ENCODE measurements at regions of chr19 and their contacts with region 1.

Region 1: DNA sequence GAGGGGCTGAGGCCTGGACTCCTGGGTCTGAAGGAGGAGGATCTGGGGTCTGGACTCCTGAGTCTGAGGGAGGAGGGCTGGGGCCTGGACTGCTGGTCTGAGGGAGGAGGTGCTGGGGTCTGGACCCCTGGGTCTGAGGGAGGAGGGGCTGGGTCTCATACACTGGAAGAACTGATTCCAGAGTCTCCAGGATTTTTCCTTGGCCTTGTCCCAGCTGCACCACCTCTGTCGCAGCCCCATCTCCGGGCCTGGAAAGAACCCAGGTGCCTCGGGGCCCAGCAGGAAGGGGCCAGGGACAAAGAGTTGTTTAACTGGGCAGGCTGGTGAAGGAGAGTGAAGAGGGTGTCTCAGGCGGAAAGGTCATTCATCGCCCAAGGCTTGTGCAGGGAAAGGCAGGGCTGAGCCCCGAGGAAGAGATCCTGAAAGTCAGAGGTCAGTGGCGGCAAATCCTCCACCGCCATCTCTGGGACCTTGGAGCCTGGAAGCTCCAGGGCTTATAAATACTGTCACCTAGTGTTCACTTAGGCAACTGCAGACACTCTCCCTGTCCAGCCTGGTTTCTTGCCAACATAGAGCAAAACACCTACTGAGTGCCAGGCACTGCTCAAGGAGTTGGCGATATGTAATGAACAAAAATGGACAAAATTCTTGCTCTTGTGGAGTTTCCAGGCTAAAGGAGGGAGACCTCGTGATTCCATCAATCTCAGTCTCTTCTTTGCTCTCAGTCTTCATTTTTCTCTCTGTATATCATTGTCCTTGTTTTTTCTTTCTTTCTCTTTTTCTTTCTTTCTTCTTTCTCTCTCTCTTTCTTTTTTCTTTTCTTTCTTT is 4.4 kb upstream of the KCNN4 start:
- H3K4me3 Mint-ChIP-seq: no peak overlapping the region
- H3K27ac Mint-ChIP-seq: peak overlapping the region; percentile 0
- H3K4me1 Mint-ChIP-seq: peaks cover 47% of the 10 kb centered on the region
- H3K27me3 Mint-ChIP-seq: no peaks in the 10 kb centered on the region

Region 2: DNA sequence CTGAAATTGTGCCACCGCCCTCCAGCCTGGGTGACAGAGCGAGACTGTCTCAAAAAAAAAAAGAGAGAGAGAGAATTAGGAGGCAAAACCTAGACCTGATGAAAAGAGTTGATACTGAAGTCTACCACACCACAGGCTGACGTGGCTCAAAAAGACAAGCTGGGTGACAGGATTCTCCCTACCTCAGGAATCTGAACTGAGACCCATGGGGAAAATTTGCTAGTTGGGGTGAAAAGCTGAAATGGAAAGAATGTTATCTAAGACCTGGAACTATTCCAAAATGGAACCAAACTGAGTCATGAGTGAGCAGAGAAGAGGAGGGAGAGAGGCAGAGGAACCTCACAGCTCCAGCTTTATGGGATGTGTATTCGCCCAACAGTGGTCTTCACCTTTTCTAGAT is 42.2 kb before region 1 on chr19:
- intact Hi-C with region 1: loop called (anchors 1 kb)
- H3K4me3 Mint-ChIP-seq: no peak overlapping the region
- H3K27ac Mint-ChIP-seq: no peak overlapping the region
- H3K4me1 Mint-ChIP-seq: peaks cover 52% of the 10 kb centered on the region
- H3K27me3 Mint-ChIP-seq: no peaks in the 10 kb centered on the region

Region 3: GRCh38 chr19:43765109-43765876 is 19.9 kb before region 1 on chr19:
- intact Hi-C with region 1: loop called (anchors 2 kb)
- H3K4me3 Mint-ChIP-seq: peak overlapping the region; percentile 18
- H3K27ac Mint-ChIP-seq: peak overlapping the region; percentile 92
- H3K4me1 Mint-ChIP-seq: peaks cover 93% of the 10 kb centered on the region
- H3K27me3 Mint-ChIP-seq: no peaks in the 10 kb centered on the region

Measured in dendritic cell treated with granulocyte-macrophage colony-stimulating factor and Interleukin-4, amounts not matched to agents 40 ng/mL and 50 ng/mL, for 4 days (primary cell).